Activated naive CD4-positive, alpha-beta T cell treated with anti-CD3 and anti-CD28 coated beads for 36 hours (primary cell): ENCODE measurements at regions of chr2 and their contacts with region 1.

Region 1: DNA sequence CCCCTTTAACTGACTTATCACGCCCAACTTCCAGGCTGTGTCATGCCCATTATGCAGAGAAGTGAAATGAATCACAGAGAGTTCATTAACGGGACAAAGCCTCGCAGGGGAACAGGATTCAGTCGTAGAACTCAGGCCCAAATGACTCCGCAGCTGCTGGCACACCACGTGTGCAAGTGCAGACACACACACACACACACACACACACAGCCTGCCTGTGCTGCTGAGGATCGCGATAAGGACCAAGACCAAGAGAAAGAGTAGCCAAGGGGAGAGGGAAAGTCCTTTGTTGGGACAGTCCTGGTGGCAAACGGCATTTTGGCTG is 90.0 kb upstream of the TAF1B start:
- DNase-seq: peak; percentile 85
- H3K4me3 Mint-ChIP-seq: peak overlapping the region; percentile 23
- H3K27ac Mint-ChIP-seq: peak overlapping the region; percentile 65
- H3K4me1 Mint-ChIP-seq: peaks cover 39% of the 10 kb centered on the region
- H3K27me3 Mint-ChIP-seq: peaks cover 22% of the 10 kb centered on the region

Region 2: DNA sequence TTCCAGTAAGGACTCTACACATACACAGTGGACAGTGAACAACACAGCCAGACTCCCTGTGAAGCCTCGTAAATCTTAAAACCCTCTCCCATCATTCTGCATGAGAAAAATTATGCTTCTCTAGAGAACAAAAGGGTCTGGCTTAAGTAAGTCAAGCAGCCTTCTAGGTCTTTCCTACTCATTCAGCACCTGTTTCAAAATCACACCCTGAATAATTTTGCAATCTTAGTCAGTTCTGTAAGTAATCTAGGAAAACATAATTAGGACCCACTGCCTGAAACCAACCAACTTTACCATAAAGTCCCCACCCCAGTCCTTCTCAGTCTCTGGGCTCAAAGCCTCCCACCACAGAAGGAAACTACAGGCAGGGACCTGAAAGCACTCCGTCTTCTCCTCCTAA is 259.1 kb before region 1 on chr2:
- CTCF ChIA-PET with region 1: no interaction called
- intact Hi-C with region 1: loop called (anchors 1 kb)
- DNase-seq: no peak
- H3K4me3 Mint-ChIP-seq: no peak overlapping the region
- H3K27ac Mint-ChIP-seq: peak overlapping the region; percentile 61
- H3K4me1 Mint-ChIP-seq: peaks cover 32% of the 10 kb centered on the region
- H3K27me3 Mint-ChIP-seq: no peaks in the 10 kb centered on the region

Region 3: GRCh38 chr2:9601397-9601796 is 151.8 kb before region 1 on chr2:
- CTCF ChIA-PET with region 1: no interaction called
- intact Hi-C with region 1: no loop called
- DNase-seq: no peak
- H3K4me3 Mint-ChIP-seq: no peak overlapping the region
- H3K27ac Mint-ChIP-seq: no peak overlapping the region
- H3K4me1 Mint-ChIP-seq: peaks cover 47% of the 10 kb centered on the region
- H3K27me3 Mint-ChIP-seq: no peaks in the 10 kb centered on the region

Region 4: DNA sequence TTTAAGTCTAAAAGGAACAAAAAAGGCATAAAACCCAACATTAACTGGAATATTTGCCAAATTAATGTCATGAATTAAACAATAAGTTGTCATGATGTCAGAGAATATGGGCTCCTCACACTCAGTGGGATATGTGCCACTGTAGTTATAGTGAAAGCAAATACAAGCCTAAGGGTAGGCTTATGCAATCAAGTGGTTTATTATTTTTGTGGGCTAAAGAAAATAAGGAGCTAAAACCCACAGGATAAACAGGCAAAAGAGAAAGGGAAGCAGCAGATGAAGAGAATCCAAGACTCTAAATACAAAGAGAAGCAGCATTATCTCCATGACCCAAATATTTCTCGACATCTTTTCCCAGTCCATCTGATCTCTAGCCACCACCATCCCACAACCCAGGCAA is 139.9 kb before region 1 on chr2:
- CTCF ChIA-PET with region 1: no interaction called
- intact Hi-C with region 1: loop called (anchors 1 kb)
- DNase-seq: no peak
- H3K4me3 Mint-ChIP-seq: no peak overlapping the region
- H3K27ac Mint-ChIP-seq: no peak overlapping the region
- H3K4me1 Mint-ChIP-seq: peaks cover 78% of the 10 kb centered on the region
- H3K27me3 Mint-ChIP-seq: no peaks in the 10 kb centered on the region

Region 5: DNA sequence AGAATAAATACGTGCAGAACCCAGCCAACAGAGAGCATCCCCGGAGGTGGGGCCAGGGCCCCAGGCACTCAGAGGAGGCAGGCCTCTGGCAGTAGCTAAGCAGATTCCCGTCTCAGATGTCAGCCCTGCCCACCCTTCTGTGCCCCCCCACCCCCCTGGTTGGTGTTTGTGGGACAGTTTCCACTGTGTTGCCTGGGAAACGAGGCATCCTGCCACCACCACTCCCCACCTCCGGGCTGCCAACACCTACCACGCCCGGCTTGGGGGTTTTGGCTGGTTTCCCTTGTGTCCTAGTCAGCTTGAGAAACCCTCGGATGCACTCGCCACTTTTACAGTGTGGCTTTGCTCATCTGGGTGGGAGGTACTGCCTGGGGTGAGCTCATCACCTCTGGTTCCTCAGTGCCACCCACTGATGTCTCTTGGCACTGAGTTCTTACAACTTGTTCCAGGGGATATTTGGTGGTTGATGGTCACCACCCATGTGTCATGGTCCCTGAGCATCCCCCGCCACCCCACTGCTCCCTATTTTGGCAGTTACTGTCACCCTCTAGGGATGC is 50.1 kb before region 1 on chr2:
- CTCF ChIA-PET with region 1: no interaction called
- intact Hi-C with region 1: loop called (anchors 1 kb)
- DNase-seq: peak; percentile 87
- H3K4me3 Mint-ChIP-seq: no peak overlapping the region
- H3K27ac Mint-ChIP-seq: no peak overlapping the region
- H3K4me1 Mint-ChIP-seq: peaks cover 25% of the 10 kb centered on the region
- H3K27me3 Mint-ChIP-seq: no peaks in the 10 kb centered on the region

Region 6: GRCh38 chr2:9770308-9771100 is 17.3 kb after region 1 on chr2:
- CTCF ChIA-PET with region 1: interaction called, 28 read pairs
- intact Hi-C with region 1: no loop called
- DNase-seq: peak; percentile 70
- H3K4me3 Mint-ChIP-seq: no peak overlapping the region
- H3K27ac Mint-ChIP-seq: no peak overlapping the region
- H3K4me1 Mint-ChIP-seq: peaks cover 6% of the 10 kb centered on the region
- H3K27me3 Mint-ChIP-seq: no peaks in the 10 kb centered on the region